GM23248 (cell line): ENCODE measurements at regions of chr11 and their contacts with region 1.

Region 1: GRCh38 chr11:36258730-36259360 is 30.4 kb downstream of the COMMD9 start:
- DNase-seq: peak; percentile 90
- H3K4me3 ChIP-seq: no peak overlapping the region
- H3K27ac ChIP-seq: no peak overlapping the region
- H3K4me1 ChIP-seq: peaks cover 7% of the 10 kb centered on the region; the same call in 1 of the 2 replicates
- H3K27me3 ChIP-seq: peaks cover 30% of the 10 kb centered on the region

Region 2: GRCh38 chr11:36034551-36035331 is 224.1 kb before region 1 on chr11:
- in situ Hi-C with region 1: loop called (anchors 10 kb)
- DNase-seq: peak; percentile 90
- H3K4me3 ChIP-seq: no peak overlapping the region
- H3K27ac ChIP-seq: no peak overlapping the region
- H3K4me1 ChIP-seq: peaks cover 24% of the 10 kb centered on the region
- H3K27me3 ChIP-seq: no peaks in the 10 kb centered on the region